ENCODE measurements at regions of chr17 and their contacts with region 1.

Region 1: DNA sequence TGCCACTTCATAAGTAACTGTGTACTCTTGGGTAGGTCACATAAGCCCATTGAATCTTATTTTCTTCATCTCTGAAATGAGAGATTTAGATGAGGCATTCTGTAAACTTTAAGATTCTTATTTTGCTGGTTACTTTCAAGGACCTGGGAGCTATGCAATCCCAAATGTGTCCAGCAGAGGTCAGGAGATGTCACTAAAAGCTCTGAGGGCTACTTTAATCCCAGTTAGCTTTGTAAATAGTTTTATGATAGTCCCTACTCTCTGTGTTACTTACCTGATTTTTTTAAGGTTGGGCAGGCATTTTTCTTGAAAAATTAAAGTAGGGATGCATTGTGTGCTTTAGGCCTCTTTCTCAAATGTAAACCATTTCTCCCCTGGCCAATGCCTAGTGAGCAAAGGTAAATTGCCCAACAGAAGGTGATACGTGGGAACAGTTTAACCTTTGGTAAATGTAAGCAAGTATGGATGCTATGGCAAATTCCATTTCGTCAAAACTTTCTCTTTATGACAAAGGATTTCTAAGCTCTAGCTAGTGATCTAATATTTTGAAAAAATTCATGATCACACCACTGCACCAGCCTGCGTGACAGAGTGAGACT is 57.1 kb upstream of the WSB1 start:
- DNase-seq: peak in 34 of 35 experiments; percentile 23 to 84 (median 64)
- ATAC-seq: peak; percentile 64 to 79 (median 74)
- H3K4me3 ChIP-seq: no peak overlapping the region
- H3K4me3 Mint-ChIP-seq: no peak overlapping the region
- H3K27ac ChIP-seq: no peak overlapping the region
- H3K27ac Mint-ChIP-seq: no peak overlapping the region
- H3K4me1 ChIP-seq: no peaks in the 10 kb centered on the region
- H3K4me1 Mint-ChIP-seq: no peaks in the 10 kb centered on the region
- H3K27me3 ChIP-seq: no peaks in the 10 kb centered on the region
- H3K27me3 Mint-ChIP-seq: no peaks in the 10 kb centered on the region

Region 2: GRCh38 chr17:27091043-27091497 is 145.7 kb before region 1 on chr17:
- CTCF ChIA-PET with region 1: no interaction called
- POLR2A ChIA-PET with region 1: no interaction called
- DNase-seq: no peak
- ATAC-seq: no peak
- H3K4me3 ChIP-seq: no peak overlapping the region
- H3K4me3 Mint-ChIP-seq: no peak overlapping the region
- H3K27ac ChIP-seq: no peak overlapping the region
- H3K27ac Mint-ChIP-seq: no peak overlapping the region
- H3K4me1 ChIP-seq: no peaks in the 10 kb centered on the region
- H3K4me1 Mint-ChIP-seq: no peaks in the 10 kb centered on the region
- H3K27me3 ChIP-seq: no peaks in the 10 kb centered on the region
- H3K27me3 Mint-ChIP-seq: peaks cover 0 to 19% of the 10 kb centered on the region in 2 donors

Region 3: GRCh38 chr17:27293898-27294688 is 57.3 kb after region 1 on chr17 and contains the start of gene WSB1:
- CTCF ChIA-PET with region 1: interaction called, 4 to 11 read pairs
- POLR2A ChIA-PET with region 1: no interaction called
- DNase-seq: peak; percentile 80 to 96 (median 91)
- ATAC-seq: peak; percentile 89 to 94 (median 92)
- H3K4me3 ChIP-seq: peak within 1 kb of the TSS; percentile 94 to 95
- H3K4me3 Mint-ChIP-seq: peak within 1 kb of the TSS; percentile 98 to 100 (median 100)
- H3K27ac ChIP-seq: peak within 1 kb of the TSS; percentile 99
- H3K27ac Mint-ChIP-seq: peak within 1 kb of the TSS; percentile 98 to 99
- H3K4me1 ChIP-seq: peaks cover 8 to 30% of the 10 kb centered on the region in 2 experiments
- H3K4me1 Mint-ChIP-seq: peaks cover 48 to 49% (median 48%) of the 10 kb centered on the region in 3 donors
- H3K27me3 ChIP-seq: no peaks in the 10 kb centered on the region
- H3K27me3 Mint-ChIP-seq: no peaks in the 10 kb centered on the region
- total RNA-seq, gene WSB1: 103 to 142 (median 115) TPM

Region 4: GRCh38 chr17:27313301-27313700 is 76.5 kb after region 1 on chr17:
- CTCF ChIA-PET with region 1: interaction called in 1 of 2 experiments, 3 read pairs
- POLR2A ChIA-PET with region 1: interaction called, 3 to 12 read pairs
- DNase-seq: no peak
- ATAC-seq: no peak
- H3K4me3 ChIP-seq: no peak overlapping the region
- H3K4me3 Mint-ChIP-seq: no peak overlapping the region
- H3K27ac ChIP-seq: no peak overlapping the region
- H3K27ac Mint-ChIP-seq: no peak overlapping the region
- H3K4me1 ChIP-seq: no peaks in the 10 kb centered on the region
- H3K4me1 Mint-ChIP-seq: no peaks in the 10 kb centered on the region
- H3K27me3 ChIP-seq: no peaks in the 10 kb centered on the region
- H3K27me3 Mint-ChIP-seq: no peaks in the 10 kb centered on the region

Region 5: GRCh38 chr17:27332485-27333409 is 95.9 kb after region 1 on chr17:
- CTCF ChIA-PET with region 1: interaction called, 7 to 62 read pairs
- POLR2A ChIA-PET with region 1: no interaction called
- DNase-seq: peak; percentile 70 to 92 (median 81)
- ATAC-seq: peak; percentile 87 to 92 (median 91)
- H3K4me3 ChIP-seq: peak overlapping the region; percentile 54 to 71
- H3K4me3 Mint-ChIP-seq: peak overlapping the region; percentile 75 to 84 (median 77)
- H3K27ac ChIP-seq: peak overlapping the region; percentile 74
- H3K27ac Mint-ChIP-seq: peak overlapping the region; percentile 82 to 84
- H3K4me1 ChIP-seq: peaks cover 3 to 18% of the 10 kb centered on the region in 2 experiments
- H3K4me1 Mint-ChIP-seq: peaks cover 19 to 24% (median 24%) of the 10 kb centered on the region in 3 donors
- H3K27me3 ChIP-seq: no peaks in the 10 kb centered on the region
- H3K27me3 Mint-ChIP-seq: peaks cover 0 to 4% of the 10 kb centered on the region in 2 donors

Region 6: GRCh38 chr17:27353461-27354050 is 116.7 kb after region 1 on chr17:
- CTCF ChIA-PET with region 1: interaction called, 8 to 11 read pairs
- POLR2A ChIA-PET with region 1: no interaction called
- DNase-seq: peak; percentile 64 to 92 (median 77)
- ATAC-seq: peak; percentile 88 to 94 (median 92)
- H3K4me3 ChIP-seq: peak overlapping the region; percentile 57 to 79
- H3K4me3 Mint-ChIP-seq: peak overlapping the region; percentile 57 to 82 (median 77)
- H3K27ac ChIP-seq: peak overlapping the region; percentile 77
- H3K27ac Mint-ChIP-seq: peak overlapping the region; percentile 81 to 87
- H3K4me1 ChIP-seq: peaks cover 0 to 25% of the 10 kb centered on the region in 2 experiments
- H3K4me1 Mint-ChIP-seq: peaks cover 14 to 35% (median 29%) of the 10 kb centered on the region in 3 donors
- H3K27me3 ChIP-seq: peaks cover 0 to 3% of the 10 kb centered on the region in 2 experiments
- H3K27me3 Mint-ChIP-seq: no peaks in the 10 kb centered on the region

Region 7: DNA sequence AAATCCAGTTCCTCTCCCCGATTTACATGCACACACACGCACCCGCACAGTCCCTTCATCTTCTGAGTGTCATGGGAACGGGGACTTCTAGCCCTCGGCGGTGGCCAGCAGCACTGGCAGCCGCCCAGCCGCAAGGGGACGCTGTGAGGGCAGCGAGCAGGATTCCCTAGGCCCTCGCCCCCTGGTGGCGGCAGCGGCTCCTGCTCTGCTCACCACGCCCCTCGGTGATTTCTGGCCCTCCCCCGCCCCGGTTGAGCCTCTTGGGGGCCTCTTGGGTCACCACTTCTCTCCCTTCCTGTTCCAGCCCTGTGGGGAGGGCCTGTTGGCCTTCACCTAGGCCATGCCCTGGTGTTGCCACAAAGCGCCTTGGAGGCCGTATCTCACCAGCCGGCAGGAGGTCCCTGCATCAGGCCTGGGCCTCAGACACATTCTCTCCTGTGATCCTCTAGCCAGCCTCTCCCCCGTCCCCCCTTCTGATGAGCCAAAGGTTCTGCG is 144.2 kb after region 1 on chr17:
- CTCF ChIA-PET with region 1: interaction called in 1 of 2 experiments, 12 read pairs
- POLR2A ChIA-PET with region 1: no interaction called
- DNase-seq: peak; percentile 25 to 84 (median 66)
- ATAC-seq: peak; percentile 69 to 83 (median 76)
- H3K4me3 ChIP-seq: no peak overlapping the region
- H3K4me3 Mint-ChIP-seq: no peak overlapping the region
- H3K27ac ChIP-seq: no peak overlapping the region
- H3K27ac Mint-ChIP-seq: no peak overlapping the region
- H3K4me1 ChIP-seq: peaks cover 0 to 6% of the 10 kb centered on the region in 2 experiments
- H3K4me1 Mint-ChIP-seq: peaks cover 0 to 3% (median 0%) of the 10 kb centered on the region in 3 donors
- H3K27me3 ChIP-seq: peaks cover 0 to 23% of the 10 kb centered on the region in 2 experiments
- H3K27me3 Mint-ChIP-seq: peaks cover 7 to 34% of the 10 kb centered on the region in 2 donors

Measured in T-cell (primary cell).